Activated T-helper 1 cell treated with anti-CD3 and anti-CD28 coated beads, Interleukin-12 subunit alpha, Interleukin-12 subunit beta, Interleukin-2, Interleukin-4 antibody, amounts not matched to agents 30 ng/mL and 10 ng/mL and 1 ng/mL, durations not matched to agents 14 hours and 24 hours and 36 hours (primary cell): ENCODE measurements at regions of chr1 and their contacts with region 1.

Region 1: DNA sequence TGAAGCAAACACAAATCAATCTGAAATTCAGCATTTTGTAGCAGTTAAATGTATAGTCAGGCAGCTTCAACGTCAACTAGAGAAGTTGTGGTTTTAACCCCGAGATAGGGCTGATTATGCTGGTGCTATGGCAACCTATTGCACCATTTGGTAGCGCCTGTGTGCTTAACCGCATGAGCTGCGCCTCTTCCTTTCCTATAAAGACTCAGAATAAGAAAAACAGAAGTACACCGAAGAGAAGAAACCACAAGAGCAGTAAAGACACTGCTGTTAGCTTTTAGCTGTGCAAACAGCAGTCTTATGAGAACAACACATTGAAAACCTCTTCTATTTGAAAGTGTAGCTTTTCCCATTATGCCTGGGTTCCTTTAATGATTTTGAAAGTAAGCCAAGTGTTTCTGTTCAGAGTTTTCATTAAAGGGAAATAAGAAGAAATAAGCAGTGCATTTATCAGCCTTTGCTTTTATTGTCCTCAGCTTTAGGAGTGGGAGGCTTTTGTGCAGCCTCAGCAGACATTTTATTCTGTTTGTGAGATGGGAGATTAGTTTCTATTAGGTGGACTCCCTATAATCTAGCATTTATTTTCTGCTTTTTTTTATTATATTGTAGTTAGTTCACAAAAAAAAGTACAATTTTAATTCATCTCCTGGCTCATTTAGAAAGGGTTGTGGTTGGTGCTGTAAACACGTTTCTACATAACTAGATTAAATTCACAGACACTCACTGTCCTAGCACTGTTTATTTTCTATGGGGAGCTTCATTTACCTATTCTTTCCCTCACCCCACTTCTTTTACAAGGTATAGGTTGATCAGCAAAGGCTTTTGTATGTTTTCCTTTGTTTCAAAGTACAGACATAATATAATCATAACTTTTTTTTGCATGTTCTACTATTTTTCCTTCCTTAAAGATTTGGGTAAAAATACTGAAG is 43.3 kb downstream of the PTPRC start:
- DNase-seq: peak; percentile 86
- H3K4me3 Mint-ChIP-seq: peak overlapping the region; percentile 78
- H3K27ac Mint-ChIP-seq: peak overlapping the region; percentile 91
- H3K4me1 Mint-ChIP-seq: peaks cover 80% of the 10 kb centered on the region
- H3K27me3 Mint-ChIP-seq: no peaks in the 10 kb centered on the region

Region 2: GRCh38 chr1:197775282-197776262 is 906.5 kb before region 1 on chr1 and contains the start of gene DENND1B:
- intact Hi-C with region 1: loop called (anchors 10 kb)
- DNase-seq: peak; percentile 80
- H3K4me3 Mint-ChIP-seq: peak within 1 kb of the TSS; percentile 85
- H3K27ac Mint-ChIP-seq: peak within 1 kb of the TSS; percentile 95
- H3K4me1 Mint-ChIP-seq: peaks cover 72% of the 10 kb centered on the region
- H3K27me3 Mint-ChIP-seq: no peaks in the 10 kb centered on the region
- total RNA-seq, gene DENND1B: 15.3 and 16.5 TPM in 2 replicates

Region 3: GRCh38 chr1:198258491-198258890 is 423.6 kb before region 1 on chr1:
- intact Hi-C with region 1: loop called (anchors 5 kb)
- DNase-seq: no peak
- H3K4me3 Mint-ChIP-seq: peak overlapping the region; percentile 11
- H3K27ac Mint-ChIP-seq: peak overlapping the region; percentile 78
- H3K4me1 Mint-ChIP-seq: peaks cover 50% of the 10 kb centered on the region
- H3K27me3 Mint-ChIP-seq: no peaks in the 10 kb centered on the region

Region 4: DNA sequence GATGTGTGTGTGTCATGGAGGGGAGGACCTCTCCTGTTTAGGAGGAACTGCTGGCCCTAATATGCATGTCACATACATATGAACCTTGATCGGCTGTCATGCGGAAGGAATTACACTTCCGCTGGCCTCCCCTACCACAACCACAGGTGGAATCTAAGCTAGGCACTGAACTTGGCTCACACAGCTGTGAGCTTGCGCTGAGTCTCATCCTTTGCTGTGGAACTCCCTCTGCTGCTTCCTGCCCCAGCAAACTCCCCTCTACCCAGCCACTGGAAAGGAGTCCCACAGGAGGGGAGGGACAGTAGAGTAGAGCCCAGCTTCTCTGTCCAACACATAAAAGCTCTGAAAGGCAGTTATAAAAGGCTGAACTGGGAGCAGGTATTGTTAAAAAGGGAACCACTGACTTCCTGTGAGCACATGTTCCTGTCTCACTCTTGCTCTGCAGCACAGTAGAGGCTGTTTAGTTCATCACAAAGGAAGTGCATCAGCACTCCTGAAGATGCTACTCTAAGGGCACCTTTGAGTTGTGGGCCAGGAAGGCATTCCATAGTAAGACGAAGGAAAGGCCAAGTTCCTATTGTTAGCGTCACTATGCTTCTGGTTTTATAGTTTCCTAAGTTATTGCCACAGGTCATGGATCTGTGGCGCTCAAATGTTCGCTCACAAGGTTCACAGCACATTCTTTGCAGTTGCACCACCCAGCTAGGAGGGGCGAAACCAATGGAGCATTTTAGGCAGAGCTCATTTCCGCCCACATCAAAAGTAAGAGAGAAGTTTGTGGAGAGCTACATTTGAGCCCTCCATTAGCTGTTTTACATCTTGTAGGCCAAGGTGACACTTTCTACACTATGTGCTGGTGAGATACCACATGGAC is 60.9 kb before region 1 on chr1:
- intact Hi-C with region 1: loop called (anchors 1 kb)
- DNase-seq: peak; percentile 66
- H3K4me3 Mint-ChIP-seq: peak overlapping the region; percentile 84
- H3K27ac Mint-ChIP-seq: peak overlapping the region; percentile 99
- H3K4me1 Mint-ChIP-seq: peaks cover 82% of the 10 kb centered on the region
- H3K27me3 Mint-ChIP-seq: no peaks in the 10 kb centered on the region

Region 5: GRCh38 chr1:198657550-198658064 is 24.5 kb before region 1 on chr1:
- intact Hi-C with region 1: loop called (anchors 1 kb)
- DNase-seq: no peak
- H3K4me3 Mint-ChIP-seq: peak overlapping the region; percentile 63
- H3K27ac Mint-ChIP-seq: peak overlapping the region; percentile 84
- H3K4me1 Mint-ChIP-seq: peaks cover 68% of the 10 kb centered on the region
- H3K27me3 Mint-ChIP-seq: no peaks in the 10 kb centered on the region

Region 6: GRCh38 chr1:198734323-198735008 is 52.4 kb after region 1 on chr1:
- intact Hi-C with region 1: loop called (anchors 1 kb)
- DNase-seq: no peak
- H3K4me3 Mint-ChIP-seq: no peak overlapping the region
- H3K27ac Mint-ChIP-seq: peak overlapping the region; percentile 73
- H3K4me1 Mint-ChIP-seq: peaks cover 79% of the 10 kb centered on the region
- H3K27me3 Mint-ChIP-seq: no peaks in the 10 kb centered on the region